ENCODE measurements at regions of chr4 and their contacts with region 1.

Region 1: GRCh38 chr4:113952452-113953029 is 26.9 kb downstream of the ARSJ start:
- DNase-seq: peak; percentile 11
- CTCF ChIP-seq: peak; percentile 53

Region 2: DNA sequence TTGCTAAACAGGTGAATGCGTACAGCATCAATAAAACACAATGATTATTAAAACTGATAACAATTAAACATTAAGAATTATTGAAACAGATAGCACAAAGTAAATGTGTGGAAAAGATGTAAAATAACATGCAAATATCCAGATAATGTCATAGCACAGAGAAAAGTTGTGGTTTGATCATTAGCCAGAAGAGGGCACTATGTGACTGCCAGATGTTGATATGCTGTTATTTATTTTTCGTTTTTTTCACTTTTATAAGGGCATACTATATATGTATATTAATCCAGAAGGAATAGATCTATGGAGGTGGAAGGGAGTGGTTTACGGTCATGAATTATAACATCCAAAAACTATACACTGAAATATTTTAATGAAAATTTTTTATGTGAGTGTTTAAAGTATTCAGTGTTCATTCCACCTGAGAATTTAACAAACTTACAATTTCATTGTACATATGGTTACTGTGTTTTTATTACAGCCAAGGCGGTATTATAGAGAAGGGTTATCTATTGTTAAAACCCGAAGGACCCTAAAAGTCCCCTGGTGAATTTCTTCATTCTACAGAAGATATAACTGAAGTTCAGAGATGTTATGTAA is 434.2 kb after region 1 on chr4:
- in situ Hi-C with region 1: loop called (anchors 25 kb)
- DNase-seq: peak; percentile 24
- CTCF ChIP-seq: peak; percentile 46

Region 3: GRCh38 chr4:114694770-114695169 is 742.2 kb after region 1 on chr4:
- in situ Hi-C with region 1: loop called (anchors 25 kb)
- DNase-seq: no peak
- CTCF ChIP-seq: peak; percentile 29